CD8-positive, alpha-beta T cell (primary cell): ENCODE measurements at regions of chr10 and their contacts with region 1.

Region 1: DNA sequence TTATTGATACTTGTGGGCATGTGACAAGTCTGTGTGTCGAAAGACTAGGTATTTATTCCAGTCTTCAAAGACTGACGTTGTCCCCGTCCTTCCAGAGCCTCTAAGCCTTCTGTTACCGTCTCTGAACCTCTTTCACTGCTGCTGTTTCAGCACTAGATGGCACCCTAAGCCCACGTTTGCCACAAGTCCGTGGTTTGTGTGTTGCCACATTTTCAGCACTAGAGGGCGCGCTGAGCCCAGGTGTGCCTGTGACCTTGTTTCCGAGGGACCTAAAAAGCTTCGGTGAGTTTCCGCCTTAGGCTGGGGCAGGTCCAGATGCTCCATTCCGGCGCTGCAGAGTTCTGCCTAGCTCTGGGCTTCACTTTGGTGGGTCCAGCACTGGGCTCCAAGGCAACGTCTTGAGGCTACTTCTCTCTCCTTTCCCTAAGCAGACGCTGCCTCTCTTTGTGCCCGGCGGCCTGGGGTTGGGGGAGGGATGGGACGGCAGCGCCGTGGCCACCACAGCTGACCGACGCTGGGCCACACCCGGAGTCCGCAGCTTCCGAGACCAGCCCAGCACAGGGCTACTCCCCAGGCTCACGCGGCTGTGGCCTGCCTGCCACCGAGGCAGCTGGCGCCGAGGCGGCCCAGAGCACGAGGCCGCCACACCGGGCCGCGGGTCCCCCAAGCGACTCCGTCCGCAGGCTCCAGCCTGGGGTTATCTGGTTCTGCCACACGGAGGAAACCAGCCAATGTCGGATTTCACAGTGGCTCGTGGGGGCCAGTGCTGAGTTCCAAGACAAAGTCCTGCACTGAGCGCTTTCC is 520.2 kb downstream of the REEP3 start:
- DNase-seq: peak; percentile 62 to 86 (median 77)
- ATAC-seq: peak; percentile 94
- H3K4me3 ChIP-seq: peak overlapping the region; percentile 47 to 56
- H3K4me3 Mint-ChIP-seq: peak overlapping the region; percentile 75
- H3K27ac ChIP-seq: no peak overlapping the region
- H3K27ac Mint-ChIP-seq: no peak overlapping the region
- H3K4me1 ChIP-seq: no peaks in the 10 kb centered on the region
- H3K4me1 Mint-ChIP-seq: peaks cover 7% of the 10 kb centered on the region
- H3K27me3 ChIP-seq: no peaks in the 10 kb centered on the region
- H3K27me3 Mint-ChIP-seq: peaks cover 19% of the 10 kb centered on the region
- CTCF ChIP-seq: peak; percentile 97

Region 2: DNA sequence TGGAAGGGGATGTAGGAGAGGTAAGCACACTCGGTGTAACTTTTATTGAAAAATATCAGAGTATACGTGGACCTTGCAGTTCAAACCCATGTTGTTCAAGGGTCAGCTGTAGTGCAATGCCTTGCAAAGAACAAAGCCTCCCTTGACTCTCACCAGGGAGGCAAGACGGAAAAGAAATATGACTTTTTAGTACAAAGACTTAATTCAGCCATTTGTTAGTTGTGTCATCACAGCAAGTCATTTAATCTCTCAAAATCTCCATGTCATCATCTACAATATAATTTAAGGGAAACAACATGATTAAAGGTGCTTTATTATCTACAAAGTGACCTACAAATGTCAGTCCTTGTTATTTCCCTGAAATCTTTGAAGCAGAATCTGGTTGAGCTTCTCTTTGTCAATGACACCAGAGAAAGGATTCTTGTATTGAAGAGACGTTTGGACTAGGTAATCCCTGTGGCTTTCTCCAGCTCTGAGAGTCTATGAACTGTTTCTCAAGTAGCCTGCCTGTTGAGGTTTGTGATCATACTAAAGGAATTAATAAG is 17.4 kb before region 1 on chr10:
- CTCF ChIA-PET with region 1: interaction called, 16 read pairs
- POLR2A ChIA-PET with region 1: no interaction called
- intact Hi-C with region 1: no loop called
- DNase-seq: no peak
- ATAC-seq: no peak
- H3K4me3 ChIP-seq: no peak overlapping the region
- H3K4me3 Mint-ChIP-seq: no peak overlapping the region
- H3K27ac ChIP-seq: no peak overlapping the region
- H3K27ac Mint-ChIP-seq: no peak overlapping the region
- H3K4me1 ChIP-seq: no peaks in the 10 kb centered on the region
- H3K4me1 Mint-ChIP-seq: no peaks in the 10 kb centered on the region
- H3K27me3 ChIP-seq: no peaks in the 10 kb centered on the region
- H3K27me3 Mint-ChIP-seq: no peaks in the 10 kb centered on the region
- CTCF ChIP-seq: no peak

Region 3: DNA sequence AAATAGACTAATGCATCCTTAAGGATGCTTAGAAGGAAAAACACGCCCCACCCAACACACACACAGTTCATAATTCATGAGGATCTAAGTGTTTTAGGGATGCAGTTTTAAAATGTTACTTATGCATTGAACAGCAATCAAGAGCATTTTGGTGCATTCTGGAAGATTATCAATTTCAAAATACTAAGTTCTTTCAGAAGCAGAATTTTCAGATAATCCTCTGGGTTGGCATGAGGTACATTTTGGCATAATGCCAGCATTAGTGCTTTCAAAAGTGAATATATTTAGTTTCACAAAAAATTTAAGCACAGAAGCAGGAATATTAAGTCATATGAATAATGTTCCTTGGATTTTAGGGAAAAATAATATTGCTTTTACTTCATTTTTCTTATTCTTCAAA is 416.9 kb after region 1 on chr10:
- CTCF ChIA-PET with region 1: no interaction called
- POLR2A ChIA-PET with region 1: no interaction called
- intact Hi-C with region 1: no loop called
- DNase-seq: no peak
- ATAC-seq: no peak
- H3K4me3 ChIP-seq: no peak overlapping the region
- H3K4me3 Mint-ChIP-seq: no peak overlapping the region
- H3K27ac ChIP-seq: no peak overlapping the region
- H3K27ac Mint-ChIP-seq: no peak overlapping the region
- H3K4me1 ChIP-seq: no peaks in the 10 kb centered on the region
- H3K4me1 Mint-ChIP-seq: no peaks in the 10 kb centered on the region
- H3K27me3 ChIP-seq: no peaks in the 10 kb centered on the region
- H3K27me3 Mint-ChIP-seq: no peaks in the 10 kb centered on the region
- CTCF ChIP-seq: no peak